Activated T-helper 2 cell treated with anti-CD3 and anti-CD28 coated beads, Interferon-gamma antibody, Interleukin-2, Interleukin-4, amounts not matched to agents 10 μg/mL and 5 μg/mL and 100 μg/mL, durations not matched to agents 14 hours and 24 hours and 36 hours (primary cell): ENCODE measurements at regions of chr17 and their contacts with region 1.

Region 1: DNA sequence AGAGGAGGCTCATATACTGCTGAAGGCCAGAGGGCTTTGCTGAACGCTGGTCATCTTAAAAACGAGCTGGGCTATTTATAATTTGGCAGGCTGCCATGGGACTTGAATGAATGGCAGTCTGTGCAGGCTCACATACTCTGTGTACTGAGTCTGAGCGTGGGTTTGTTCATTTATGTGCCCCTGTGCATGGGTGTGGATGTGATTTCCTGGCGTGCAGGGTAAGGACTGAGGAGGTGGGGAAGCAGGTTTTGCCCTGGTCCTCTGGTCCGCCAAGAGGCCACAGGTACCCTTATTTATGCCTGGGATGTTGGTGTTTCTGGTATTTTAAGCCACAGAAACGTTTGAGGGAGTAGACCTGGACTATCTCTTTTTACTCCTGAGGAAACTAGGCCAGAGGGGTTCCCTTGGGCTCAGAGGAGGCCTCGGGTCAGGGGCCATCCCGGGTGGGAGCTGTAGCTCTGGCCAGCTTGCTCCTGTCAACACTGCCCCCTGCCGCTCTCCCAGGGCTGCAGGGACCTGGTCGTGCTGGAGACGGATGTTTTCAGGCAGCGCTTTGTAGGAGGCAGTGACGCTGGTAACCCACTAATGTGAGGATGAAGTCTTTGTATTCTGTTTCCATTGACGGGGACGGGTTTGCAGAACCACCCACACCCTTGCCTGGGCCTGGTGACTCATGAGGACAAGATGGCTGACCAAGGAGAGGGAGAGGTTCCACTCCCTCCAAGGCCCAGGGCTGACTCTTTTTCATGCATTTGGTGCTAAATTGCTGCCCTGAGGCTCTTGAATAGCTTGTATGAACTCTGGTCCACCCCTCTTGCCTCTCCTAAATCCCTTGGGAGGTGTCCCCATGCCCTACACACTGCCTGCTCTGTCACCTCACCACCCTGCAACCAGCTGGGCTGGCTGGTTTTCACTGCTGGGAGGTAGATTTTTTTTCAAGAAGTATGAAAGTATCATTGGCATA is 184.5 kb downstream of the MSI2 start:
- DNase-seq: peak; percentile 62
- H3K4me3 Mint-ChIP-seq: peak overlapping the region; percentile 23
- H3K27ac Mint-ChIP-seq: peak overlapping the region; percentile 99
- H3K4me1 Mint-ChIP-seq: peaks cover 80% of the 10 kb centered on the region
- H3K27me3 Mint-ChIP-seq: no peaks in the 10 kb centered on the region

Region 2: DNA sequence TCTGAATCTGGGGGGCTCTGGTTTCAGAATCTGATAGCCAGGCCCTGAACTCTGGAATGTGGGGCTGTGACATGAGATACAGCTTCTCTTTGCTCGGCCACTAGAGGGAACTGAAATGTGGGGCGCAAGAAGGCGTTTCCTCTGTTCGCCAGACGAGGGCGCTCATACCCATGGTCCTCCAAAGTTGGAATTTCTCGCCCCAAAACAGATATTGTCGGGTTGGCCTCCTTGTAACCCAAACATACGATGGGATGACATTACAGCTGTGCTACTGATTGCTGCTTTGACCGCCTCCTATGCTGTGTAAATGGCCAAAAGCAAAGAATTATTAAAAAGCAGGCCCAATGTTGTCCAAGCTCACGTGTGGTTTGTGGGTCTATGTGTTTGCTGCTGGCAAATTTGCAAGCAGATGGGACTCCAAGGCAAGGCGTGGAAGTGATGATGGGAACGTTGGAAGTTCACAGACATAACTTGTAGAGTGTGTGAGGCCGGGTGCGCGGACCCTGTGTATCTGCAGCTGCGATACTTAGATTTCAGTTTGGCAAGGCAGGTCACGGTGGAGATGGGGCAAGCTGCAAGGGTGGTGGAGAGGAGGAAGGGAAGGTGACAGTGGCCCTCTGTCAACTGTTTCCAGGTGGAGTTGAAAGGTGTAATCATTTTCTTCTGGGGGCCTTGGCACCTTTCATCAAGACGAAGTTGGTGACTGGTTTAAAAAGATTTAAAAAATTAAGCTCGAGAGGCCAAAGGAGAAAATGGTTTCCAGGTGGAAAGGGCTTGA is 197.4 kb before region 1 on chr17:
- intact Hi-C with region 1: loop called (anchors 1 kb)
- DNase-seq: peak; percentile 64
- H3K4me3 Mint-ChIP-seq: no peak overlapping the region
- H3K27ac Mint-ChIP-seq: peak overlapping the region; percentile 40
- H3K4me1 Mint-ChIP-seq: peaks cover 8% of the 10 kb centered on the region
- H3K27me3 Mint-ChIP-seq: peaks cover 17% of the 10 kb centered on the region

Region 3: GRCh38 chr17:57284984-57285646 is 155.7 kb before region 1 on chr17:
- intact Hi-C with region 1: loop called (anchors 2 kb)
- DNase-seq: peak; percentile 58
- H3K4me3 Mint-ChIP-seq: peak overlapping the region; percentile 68
- H3K27ac Mint-ChIP-seq: peak overlapping the region; percentile 88
- H3K4me1 Mint-ChIP-seq: peaks cover 76% of the 10 kb centered on the region
- H3K27me3 Mint-ChIP-seq: no peaks in the 10 kb centered on the region

Region 4: DNA sequence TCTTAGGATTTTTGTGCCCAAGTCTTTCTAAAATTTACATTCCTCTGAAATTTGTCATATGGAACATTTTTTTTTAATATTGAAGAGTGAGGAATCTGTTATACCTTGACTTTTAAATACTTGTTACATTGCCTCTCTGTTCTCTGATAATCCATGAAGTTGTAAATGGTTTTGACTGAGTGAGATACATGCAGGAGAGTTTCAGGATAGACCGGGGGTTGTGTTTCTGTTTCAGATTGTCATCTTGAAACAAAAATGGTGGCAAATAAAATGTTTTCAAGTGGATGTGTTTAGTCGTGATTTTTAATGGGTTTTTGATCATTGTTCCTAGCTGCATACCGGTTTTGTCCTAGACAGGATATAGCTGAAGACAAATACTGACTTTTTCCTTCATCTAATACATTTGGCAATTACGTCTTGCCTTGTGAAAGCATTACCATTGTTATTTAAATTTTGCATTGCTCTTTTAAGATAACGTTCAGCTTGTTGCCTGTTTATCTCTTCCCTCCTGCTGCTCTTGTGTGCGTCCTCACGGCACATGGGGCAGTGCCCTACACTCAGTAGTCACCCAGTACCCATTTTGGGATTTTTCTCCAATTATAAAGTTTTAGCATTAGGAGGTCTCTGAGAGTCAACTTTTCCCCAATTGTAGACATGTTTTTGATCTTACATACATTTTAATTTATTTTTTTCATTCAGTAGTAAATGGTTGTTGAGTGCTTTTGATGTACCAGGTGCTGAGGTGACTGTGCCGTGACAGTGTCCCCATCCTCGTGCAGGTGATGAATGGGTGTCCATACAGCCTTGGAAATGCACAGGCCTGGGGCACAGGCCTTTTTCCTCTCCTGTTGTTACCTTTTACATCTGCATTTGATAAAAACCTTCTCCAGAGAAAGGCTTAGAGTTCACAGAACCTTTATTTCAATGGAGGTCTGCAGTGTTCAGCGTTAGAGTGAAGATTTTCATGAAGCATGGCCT is 14.6 kb before region 1 on chr17:
- intact Hi-C with region 1: loop called (anchors 1 kb)
- DNase-seq: no peak
- H3K4me3 Mint-ChIP-seq: no peak overlapping the region
- H3K27ac Mint-ChIP-seq: peak overlapping the region; percentile 58
- H3K4me1 Mint-ChIP-seq: peaks cover 41% of the 10 kb centered on the region
- H3K27me3 Mint-ChIP-seq: no peaks in the 10 kb centered on the region

Region 5: GRCh38 chr17:57505841-57506773 is 65.3 kb after region 1 on chr17:
- intact Hi-C with region 1: loop called (anchors 2 kb)
- DNase-seq: no peak
- H3K4me3 Mint-ChIP-seq: no peak overlapping the region
- H3K27ac Mint-ChIP-seq: no peak overlapping the region
- H3K4me1 Mint-ChIP-seq: peaks cover 22% of the 10 kb centered on the region
- H3K27me3 Mint-ChIP-seq: no peaks in the 10 kb centered on the region